ENCODE measurements at regions of chr17 and their contacts with region 1.

Region 1: GRCh38 chr17:17001874-17002520 is 30.1 kb upstream of the TNFRSF13B start:
- DNase-seq: peak; percentile 83 to 90
- H3K4me3 ChIP-seq: no peak overlapping the region
- H3K4me3 Mint-ChIP-seq: no peak overlapping the region
- H3K27ac Mint-ChIP-seq: peak overlapping the region; percentile 35
- H3K4me1 ChIP-seq: peaks cover 3% of the 10 kb centered on the region; the same call in 1 of the 2 replicates
- H3K4me1 Mint-ChIP-seq: peaks cover 13% of the 10 kb centered on the region
- H3K27me3 ChIP-seq: no peaks in the 10 kb centered on the region; the same call in 1 of the 2 replicates
- H3K27me3 Mint-ChIP-seq: no peaks in the 10 kb centered on the region
- CTCF ChIP-seq: peak; percentile 95 to 98

Region 2: GRCh38 chr17:16945663-16946218 is 56.3 kb before region 1 on chr17:
- CTCF ChIA-PET with region 1: no interaction called
- POLR2A ChIA-PET with region 1: no interaction called
- intact Hi-C with region 1: no loop called
- DNase-seq: no peak
- H3K4me3 ChIP-seq: no peak overlapping the region
- H3K4me3 Mint-ChIP-seq: no peak overlapping the region
- H3K27ac Mint-ChIP-seq: no peak overlapping the region
- H3K4me1 ChIP-seq: no peaks in the 10 kb centered on the region
- H3K4me1 Mint-ChIP-seq: no peaks in the 10 kb centered on the region
- H3K27me3 ChIP-seq: no peaks in the 10 kb centered on the region
- H3K27me3 Mint-ChIP-seq: no peaks in the 10 kb centered on the region
- CTCF ChIP-seq: peak in 1 of 2 experiments; percentile 21

Region 3: GRCh38 chr17:16971458-16972338 is 30.3 kb before region 1 on chr17 and contains the start of gene TNFRSF13B:
- CTCF ChIA-PET with region 1: no interaction called
- POLR2A ChIA-PET with region 1: no interaction called
- intact Hi-C with region 1: no loop called
- DNase-seq: no peak
- H3K4me3 ChIP-seq: no peak within 1 kb of the TSS
- H3K4me3 Mint-ChIP-seq: no peak within 1 kb of the TSS
- H3K27ac Mint-ChIP-seq: no peak within 1 kb of the TSS
- H3K4me1 ChIP-seq: no peaks in the 10 kb centered on the region
- H3K4me1 Mint-ChIP-seq: no peaks in the 10 kb centered on the region
- H3K27me3 ChIP-seq: no peaks in the 10 kb centered on the region; the same call in 1 of the 2 replicates
- H3K27me3 Mint-ChIP-seq: peaks cover 8% of the 10 kb centered on the region
- CTCF ChIP-seq: no peak
- total RNA-seq, gene TNFRSF13B: not detected in 2 replicates

Region 4: DNA sequence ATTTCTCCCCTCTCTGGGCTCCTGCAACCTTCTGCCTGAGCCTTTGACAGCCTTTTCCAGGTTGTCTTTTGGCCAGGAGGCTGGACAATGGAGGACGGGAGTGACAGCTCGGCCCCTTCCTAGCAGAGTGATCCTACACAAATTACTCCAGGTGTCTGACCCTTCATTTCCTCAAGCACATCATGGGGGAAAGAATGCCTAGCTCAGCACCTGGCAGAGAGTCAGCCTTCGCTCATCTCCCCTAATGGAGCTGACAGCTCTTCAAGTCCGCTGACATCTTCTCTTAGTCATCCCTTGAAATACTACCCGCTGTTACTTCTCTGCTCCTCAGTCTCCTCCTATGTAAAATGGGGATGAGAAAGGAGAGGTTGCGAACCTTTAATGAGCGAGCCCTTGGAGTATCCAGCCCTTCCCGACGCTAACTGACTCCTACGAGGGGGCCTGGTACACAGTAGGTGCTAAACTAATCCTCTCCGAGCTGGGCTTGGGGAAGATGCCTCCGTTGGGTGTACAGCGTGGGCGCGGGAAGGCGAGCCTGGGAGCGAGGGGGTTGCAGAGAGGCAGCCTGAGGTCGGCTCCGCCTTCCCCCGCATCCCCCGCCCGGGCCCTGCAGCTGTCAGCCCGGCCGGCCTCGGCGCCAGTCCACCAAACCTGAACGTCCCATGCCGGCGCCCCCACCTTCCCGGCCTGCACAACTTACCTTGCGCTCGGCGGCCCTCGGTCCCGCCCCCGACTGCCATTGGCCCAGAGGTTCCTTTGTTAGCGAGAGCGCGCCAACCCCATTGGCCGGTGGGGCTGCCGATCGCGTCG is 39.8 kb after region 1 on chr17:
- CTCF ChIA-PET with region 1: no interaction called
- POLR2A ChIA-PET with region 1: no interaction called
- intact Hi-C with region 1: loop called (anchors 5 kb)
- DNase-seq: peak; percentile 100
- H3K4me3 ChIP-seq: peak overlapping the region; percentile 50
- H3K4me3 Mint-ChIP-seq: peak overlapping the region; percentile 68
- H3K27ac Mint-ChIP-seq: peak overlapping the region; percentile 49
- H3K4me1 ChIP-seq: peaks cover 26% of the 10 kb centered on the region
- H3K4me1 Mint-ChIP-seq: peaks cover 33% of the 10 kb centered on the region
- H3K27me3 ChIP-seq: no peaks in the 10 kb centered on the region
- H3K27me3 Mint-ChIP-seq: no peaks in the 10 kb centered on the region
- CTCF ChIP-seq: no peak

Region 5: DNA sequence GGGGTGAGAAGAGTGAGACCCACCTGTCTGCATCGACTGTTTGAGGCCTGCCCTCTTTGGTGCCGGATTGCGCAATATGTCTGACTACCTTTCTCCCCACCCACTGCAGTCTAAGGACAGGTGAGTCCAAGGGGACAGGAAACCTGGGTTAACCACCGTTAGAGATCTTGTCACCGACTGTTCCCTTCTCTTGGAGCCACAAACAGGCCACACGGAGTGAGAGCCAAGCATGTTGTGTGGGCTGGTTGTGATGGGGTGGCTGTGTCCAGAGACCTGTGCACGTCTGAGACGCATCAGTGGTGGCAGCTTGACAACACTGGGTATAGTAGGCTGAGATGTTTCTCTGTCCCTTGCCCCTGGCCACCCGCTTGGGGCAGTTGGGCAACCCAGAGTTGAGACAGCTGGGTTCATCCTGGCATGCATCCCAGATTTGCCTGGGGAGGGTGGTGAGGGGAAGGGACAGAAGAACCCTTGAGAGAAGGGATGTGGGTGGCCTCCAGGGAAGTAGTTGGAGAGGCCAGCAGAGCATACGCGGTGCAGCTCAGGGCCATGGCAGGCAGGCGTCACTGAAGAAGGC is 61.6 kb after region 1 on chr17:
- CTCF ChIA-PET with region 1: no interaction called
- POLR2A ChIA-PET with region 1: no interaction called
- intact Hi-C with region 1: no loop called
- DNase-seq: no peak
- H3K4me3 ChIP-seq: no peak overlapping the region
- H3K4me3 Mint-ChIP-seq: no peak overlapping the region
- H3K27ac Mint-ChIP-seq: peak overlapping the region; percentile 51
- H3K4me1 ChIP-seq: peaks cover 19% of the 10 kb centered on the region
- H3K4me1 Mint-ChIP-seq: peaks cover 24% of the 10 kb centered on the region
- H3K27me3 ChIP-seq: no peaks in the 10 kb centered on the region
- H3K27me3 Mint-ChIP-seq: no peaks in the 10 kb centered on the region
- CTCF ChIP-seq: no peak

Region 6: GRCh38 chr17:17125136-17126084 is 123.4 kb after region 1 on chr17:
- CTCF ChIA-PET with region 1: no interaction called
- POLR2A ChIA-PET with region 1: no interaction called
- intact Hi-C with region 1: loop called (anchors 5 kb)
- DNase-seq: no peak
- H3K4me3 ChIP-seq: no peak overlapping the region
- H3K4me3 Mint-ChIP-seq: no peak overlapping the region
- H3K27ac Mint-ChIP-seq: no peak overlapping the region
- H3K4me1 ChIP-seq: no peaks in the 10 kb centered on the region
- H3K4me1 Mint-ChIP-seq: no peaks in the 10 kb centered on the region
- H3K27me3 ChIP-seq: no peaks in the 10 kb centered on the region
- H3K27me3 Mint-ChIP-seq: no peaks in the 10 kb centered on the region
- CTCF ChIP-seq: no peak

Region 7: GRCh38 chr17:17186051-17186450 is 184.1 kb after region 1 on chr17:
- CTCF ChIA-PET with region 1: no interaction called
- POLR2A ChIA-PET with region 1: no interaction called
- intact Hi-C with region 1: loop called (anchors 10 kb)
- DNase-seq: peak in 1 of 2 experiments; percentile 28
- H3K4me3 ChIP-seq: no peak overlapping the region
- H3K4me3 Mint-ChIP-seq: no peak overlapping the region
- H3K27ac Mint-ChIP-seq: peak overlapping the region; percentile 32
- H3K4me1 ChIP-seq: no peaks in the 10 kb centered on the region
- H3K4me1 Mint-ChIP-seq: peaks cover 10% of the 10 kb centered on the region
- H3K27me3 ChIP-seq: no peaks in the 10 kb centered on the region
- H3K27me3 Mint-ChIP-seq: no peaks in the 10 kb centered on the region
- CTCF ChIP-seq: no peak

Region 8: DNA sequence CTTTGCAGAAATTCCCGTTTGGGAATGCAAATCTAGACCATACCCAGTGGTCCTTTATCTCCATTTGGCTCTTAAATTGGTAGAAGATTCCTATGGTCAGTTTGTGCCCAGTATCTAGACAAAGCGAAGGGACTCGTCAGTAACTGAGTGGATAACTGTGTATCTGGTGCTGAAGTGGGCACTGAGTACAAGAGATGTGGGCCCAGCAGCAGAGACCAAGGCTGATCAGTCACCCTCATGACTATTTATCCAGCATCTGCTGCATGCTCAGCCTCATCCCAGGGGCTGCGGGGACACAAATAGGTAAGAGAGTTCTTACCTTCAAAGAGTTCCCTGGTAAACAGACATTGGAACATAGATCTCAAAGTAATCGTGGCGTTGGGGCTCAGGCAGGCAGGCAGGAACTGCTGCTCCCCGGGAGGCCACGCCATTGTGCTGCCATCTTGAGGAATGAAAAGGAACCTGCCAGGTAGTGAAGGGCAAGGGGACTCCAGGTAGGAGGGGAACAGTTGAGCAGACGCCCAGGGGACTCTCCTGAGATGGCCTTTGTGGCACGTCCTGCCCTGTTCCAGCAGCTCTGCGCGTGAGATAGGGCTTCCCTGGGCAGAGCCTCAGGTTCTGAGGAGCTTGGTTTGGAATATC is 311.5 kb after region 1 on chr17:
- CTCF ChIA-PET with region 1: no interaction called
- POLR2A ChIA-PET with region 1: no interaction called
- intact Hi-C with region 1: loop called (anchors 2 kb)
- DNase-seq: peak; percentile 80 to 82
- H3K4me3 ChIP-seq: no peak overlapping the region
- H3K4me3 Mint-ChIP-seq: no peak overlapping the region
- H3K27ac Mint-ChIP-seq: no peak overlapping the region
- H3K4me1 ChIP-seq: no peaks in the 10 kb centered on the region
- H3K4me1 Mint-ChIP-seq: no peaks in the 10 kb centered on the region
- H3K27me3 ChIP-seq: no peaks in the 10 kb centered on the region
- H3K27me3 Mint-ChIP-seq: no peaks in the 10 kb centered on the region
- CTCF ChIP-seq: peak; percentile 74 to 89